ENCODE measurements at regions of chr3 and their contacts with region 1.

Region 1: DNA sequence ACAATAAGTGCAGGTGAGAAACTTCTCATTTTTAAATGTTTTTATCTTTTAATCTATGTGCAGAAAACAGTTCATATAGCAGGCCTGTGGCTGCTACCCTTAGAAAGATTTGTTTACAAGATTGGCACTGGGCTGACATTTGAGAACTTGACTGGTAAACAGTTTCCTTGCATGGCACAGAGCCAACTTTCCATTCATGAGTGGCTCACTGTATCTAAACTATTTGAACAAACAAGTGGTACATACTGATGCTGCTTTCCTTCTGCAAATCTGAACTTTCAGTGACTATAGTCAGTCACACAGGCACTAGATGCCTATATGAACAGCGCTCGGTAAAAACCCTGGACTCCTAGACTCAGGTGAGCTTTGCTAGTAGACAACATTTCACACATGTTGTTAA is 6.3 kb upstream of the GTPBP8 start:
- DNase-seq: no peak
- ATAC-seq: no peak
- H3K4me3 ChIP-seq: no peak overlapping the region
- H3K27ac ChIP-seq: no peak overlapping the region
- H3K4me1 ChIP-seq: peaks cover 0 to 3% (median 0%) of the 10 kb centered on the region in 3 donors
- H3K27me3 ChIP-seq: no peaks in the 10 kb centered on the region
- CTCF ChIP-seq: no peak

Region 2: GRCh38 chr3:112582244-112582874 is 402.1 kb before region 1 on chr3:
- intact Hi-C with region 1: loop called in 1 of 3 experiments (anchors 5 kb)
- DNase-seq: no peak
- ATAC-seq: peak in 2 of 4 donors; percentile 45 to 54
- H3K4me3 ChIP-seq: no peak overlapping the region
- H3K27ac ChIP-seq: no peak overlapping the region
- H3K4me1 ChIP-seq: no peaks in the 10 kb centered on the region
- H3K27me3 ChIP-seq: no peaks in the 10 kb centered on the region
- CTCF ChIP-seq: peak in 3 of 4 donors; percentile 17 to 27 (median 26)

Region 3: DNA sequence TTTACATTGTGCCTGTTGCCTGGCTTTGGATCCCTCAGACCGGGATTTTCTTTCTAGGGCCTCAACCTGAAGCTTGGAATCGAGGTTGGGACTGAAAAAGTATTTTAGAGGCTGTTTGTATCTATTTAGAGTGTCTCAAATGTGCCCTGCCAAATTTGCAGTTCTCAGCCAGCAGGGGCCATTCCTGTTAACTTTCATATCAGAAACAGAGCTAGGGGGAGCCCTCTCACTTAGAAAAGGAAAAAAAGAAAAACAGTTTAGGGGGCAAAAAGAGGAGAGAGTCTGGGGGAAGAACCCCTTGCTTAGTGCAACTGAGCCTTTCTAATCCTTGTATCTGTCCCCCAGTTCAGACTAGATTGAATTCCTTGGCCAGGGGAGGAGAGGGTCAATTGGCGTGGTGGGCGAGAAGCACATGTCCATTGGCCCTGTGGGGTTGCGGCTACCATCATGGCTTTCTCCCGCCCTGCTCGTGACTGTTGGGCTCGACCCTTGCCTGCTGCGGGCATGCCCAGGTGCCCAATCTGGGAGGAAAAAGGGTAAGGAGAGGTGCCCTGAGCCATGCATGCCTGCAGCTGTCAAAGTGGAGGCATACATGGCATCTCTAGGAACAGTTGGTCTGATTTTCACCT is 355.2 kb after region 1 on chr3:
- intact Hi-C with region 1: no loop called
- DNase-seq: no peak
- ATAC-seq: no peak
- H3K4me3 ChIP-seq: no peak overlapping the region
- H3K27ac ChIP-seq: no peak overlapping the region
- H3K4me1 ChIP-seq: no peaks in the 10 kb centered on the region
- H3K27me3 ChIP-seq: no peaks in the 10 kb centered on the region
- CTCF ChIP-seq: no peak

Measured in pancreas (tissue), 10 donors.